CD8-positive, alpha-beta T cell (primary cell): ENCODE measurements at regions of chr6 and their contacts with region 1.

Region 1: DNA sequence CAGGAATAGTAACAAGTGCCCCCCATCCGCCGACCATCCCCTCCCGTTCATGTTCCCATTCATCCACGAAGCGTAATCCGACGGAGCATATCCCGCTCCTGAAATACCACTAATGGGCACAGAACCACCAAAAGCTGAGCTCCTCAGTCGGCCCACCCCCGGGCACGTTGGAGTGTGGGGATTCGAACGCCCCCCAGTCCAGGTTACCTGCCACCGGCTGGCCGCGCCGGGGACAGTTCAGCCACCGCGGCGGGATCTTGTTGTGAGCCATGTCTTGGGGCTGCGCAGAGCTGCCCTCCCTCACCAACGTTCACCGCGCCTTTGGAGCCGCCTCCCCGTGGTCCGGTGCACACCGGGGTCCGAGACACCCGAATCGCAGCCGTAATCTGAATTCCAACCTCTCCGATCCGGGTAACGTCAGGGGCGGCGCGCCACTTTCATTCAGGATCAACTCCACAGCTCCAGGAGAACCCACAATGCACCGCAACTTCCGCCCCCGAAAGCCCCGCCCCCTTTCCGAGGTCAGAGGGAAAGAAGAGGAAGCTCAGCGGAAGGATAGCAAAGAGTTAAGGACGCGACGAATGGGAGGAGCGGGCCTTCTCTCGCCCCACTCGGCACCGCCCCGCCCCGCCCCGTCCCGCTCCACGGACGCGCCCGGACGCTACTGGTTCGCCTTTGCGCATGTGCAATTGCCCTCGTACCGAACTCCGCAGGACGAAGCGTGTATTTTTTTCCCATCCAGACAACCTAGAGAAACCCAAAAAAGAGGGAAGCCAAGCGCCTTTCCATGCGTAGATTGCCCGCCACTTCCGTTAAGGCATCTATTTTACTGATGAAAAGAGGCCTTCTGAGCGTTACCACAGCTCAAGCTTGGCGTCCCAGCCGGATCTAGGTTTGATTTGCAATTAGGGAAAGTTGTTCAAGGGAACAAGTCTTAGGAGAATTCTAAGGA is at the start of gene RNGTT:
- DNase-seq: peak; percentile 95 to 98 (median 98)
- ATAC-seq: peak; percentile 99
- H3K4me3 ChIP-seq: peak within 1 kb of the TSS; percentile 90 to 92
- H3K4me3 Mint-ChIP-seq: peak within 1 kb of the TSS; percentile 98
- H3K27ac ChIP-seq: peak within 1 kb of the TSS; percentile 58 to 73
- H3K27ac Mint-ChIP-seq: peak within 1 kb of the TSS; percentile 94
- H3K4me1 ChIP-seq: peaks cover 20% of the 10 kb centered on the region
- H3K4me1 Mint-ChIP-seq: peaks cover 51% of the 10 kb centered on the region
- H3K27me3 ChIP-seq: no peaks in the 10 kb centered on the region
- H3K27me3 Mint-ChIP-seq: no peaks in the 10 kb centered on the region
- CTCF ChIP-seq: no peak
- total RNA-seq, gene RNGTT: 10.1 to 10.3 TPM

Region 2: GRCh38 chr6:87322304-87323212 is 1640.9 kb before region 1 on chr6 and contains the start of gene SMIM8:
- CTCF ChIA-PET with region 1: no interaction called
- POLR2A ChIA-PET with region 1: no interaction called
- intact Hi-C with region 1: loop called in 1 of 2 experiments (anchors 5 kb)
- DNase-seq: peak; percentile 66 to 90 (median 86)
- ATAC-seq: peak; percentile 99
- H3K4me3 ChIP-seq: peak within 1 kb of the TSS; percentile 72 to 86
- H3K4me3 Mint-ChIP-seq: peak within 1 kb of the TSS; percentile 94
- H3K27ac ChIP-seq: peak within 1 kb of the TSS; percentile 52 to 58
- H3K27ac Mint-ChIP-seq: peak within 1 kb of the TSS; percentile 90
- H3K4me1 ChIP-seq: peaks cover 6% of the 10 kb centered on the region
- H3K4me1 Mint-ChIP-seq: peaks cover 25% of the 10 kb centered on the region
- H3K27me3 ChIP-seq: no peaks in the 10 kb centered on the region
- H3K27me3 Mint-ChIP-seq: no peaks in the 10 kb centered on the region
- CTCF ChIP-seq: peak; percentile 99
- total RNA-seq, gene SMIM8: 4.2 TPM

Region 3: GRCh38 chr6:87472525-87473418 is 1490.6 kb before region 1 on chr6 and contains the start of gene SLC35A1:
- CTCF ChIA-PET with region 1: no interaction called
- POLR2A ChIA-PET with region 1: no interaction called
- intact Hi-C with region 1: loop called in 1 of 2 experiments (anchors 2 kb)
- DNase-seq: peak; percentile 73 to 93 (median 86)
- ATAC-seq: peak; percentile 91
- H3K4me3 ChIP-seq: peak within 1 kb of the TSS; percentile 93 to 96
- H3K4me3 Mint-ChIP-seq: peak within 1 kb of the TSS; percentile 99
- H3K27ac ChIP-seq: peak within 1 kb of the TSS; percentile 97 to 98
- H3K27ac Mint-ChIP-seq: peak within 1 kb of the TSS; percentile 100
- H3K4me1 ChIP-seq: peaks cover 15% of the 10 kb centered on the region
- H3K4me1 Mint-ChIP-seq: peaks cover 18% of the 10 kb centered on the region
- H3K27me3 ChIP-seq: no peaks in the 10 kb centered on the region
- H3K27me3 Mint-ChIP-seq: peaks cover 3% of the 10 kb centered on the region
- CTCF ChIP-seq: peak; percentile 20
- total RNA-seq, gene SLC35A1: 4.3 to 4.9 TPM

Region 4: GRCh38 chr6:89145787-89146646 is 182.6 kb after region 1 on chr6 and contains the start of gene PM20D2:
- CTCF ChIA-PET with region 1: no interaction called
- POLR2A ChIA-PET with region 1: interaction called, 3 read pairs
- intact Hi-C with region 1: loop called in 1 of 2 experiments (anchors 1 kb)
- DNase-seq: peak; percentile 35 to 80 (median 64)
- ATAC-seq: peak; percentile 77
- H3K4me3 ChIP-seq: peak within 1 kb of the TSS; percentile 66 to 87
- H3K4me3 Mint-ChIP-seq: peak within 1 kb of the TSS; percentile 96
- H3K27ac ChIP-seq: peak within 1 kb of the TSS; percentile 73 to 85
- H3K27ac Mint-ChIP-seq: peak within 1 kb of the TSS; percentile 97
- H3K4me1 ChIP-seq: peaks cover 19% of the 10 kb centered on the region
- H3K4me1 Mint-ChIP-seq: peaks cover 34% of the 10 kb centered on the region
- H3K27me3 ChIP-seq: no peaks in the 10 kb centered on the region
- H3K27me3 Mint-ChIP-seq: no peaks in the 10 kb centered on the region
- CTCF ChIP-seq: no peak
- total RNA-seq, gene PM20D2: 5.5 to 6.2 TPM

Region 5: GRCh38 chr6:89638320-89639195 is 675.1 kb after region 1 on chr6 and contains the start of gene LYRM2:
- CTCF ChIA-PET with region 1: interaction called, 3 read pairs
- POLR2A ChIA-PET with region 1: interaction called, 3 read pairs
- intact Hi-C with region 1: loop called in 1 of 2 experiments (anchors 2 kb)
- DNase-seq: peak; percentile 83 to 95 (median 89)
- ATAC-seq: peak; percentile 95
- H3K4me3 ChIP-seq: peak within 1 kb of the TSS; percentile 84 to 90
- H3K4me3 Mint-ChIP-seq: peak within 1 kb of the TSS; percentile 99
- H3K27ac ChIP-seq: peak within 1 kb of the TSS; percentile 91 to 98
- H3K27ac Mint-ChIP-seq: peak within 1 kb of the TSS; percentile 99
- H3K4me1 ChIP-seq: peaks cover 15% of the 10 kb centered on the region
- H3K4me1 Mint-ChIP-seq: peaks cover 34% of the 10 kb centered on the region
- H3K27me3 ChIP-seq: no peaks in the 10 kb centered on the region
- H3K27me3 Mint-ChIP-seq: no peaks in the 10 kb centered on the region
- CTCF ChIP-seq: no peak
- total RNA-seq, gene LYRM2: 16.7 to 17.8 TPM

Region 6: DNA sequence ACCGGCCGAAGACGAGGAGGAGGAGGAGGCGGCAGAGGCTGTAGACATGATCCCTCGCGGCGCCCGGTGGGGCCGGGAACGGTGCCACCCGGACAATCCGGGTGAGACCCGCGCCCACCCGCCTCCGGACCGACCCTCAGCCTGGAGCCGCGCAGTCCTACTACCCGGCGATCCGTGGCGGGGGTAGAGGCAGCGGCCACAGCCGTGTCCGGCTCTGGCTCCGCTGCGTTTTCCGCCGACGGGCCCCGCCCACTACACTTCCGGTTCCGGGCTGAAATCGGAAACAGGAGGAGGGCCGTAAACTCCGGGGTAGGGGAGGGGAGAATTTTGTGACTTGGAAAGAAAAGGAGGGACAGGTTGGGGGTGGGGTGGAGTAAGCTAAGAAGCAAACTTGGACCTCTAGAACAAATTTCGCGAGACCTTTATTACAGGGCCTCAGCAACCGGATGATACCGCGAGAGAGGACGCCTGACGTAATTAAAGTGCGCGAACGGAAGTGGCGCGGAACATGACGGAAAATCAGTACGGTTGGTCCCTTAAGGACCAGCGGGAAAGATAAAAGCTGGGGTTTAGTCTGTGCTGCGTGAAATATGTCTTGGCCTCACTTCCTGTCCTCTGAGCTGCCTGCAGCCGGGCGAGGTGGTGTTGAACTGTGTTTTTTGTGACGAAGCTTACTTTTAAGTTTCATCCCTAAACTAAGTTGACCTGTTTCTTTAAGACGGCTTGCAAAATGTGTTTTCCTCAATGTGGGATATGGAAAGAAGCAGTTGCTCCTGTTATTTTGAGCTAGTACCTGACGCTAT is 1623.6 kb after region 1 on chr6 and contains the start of gene MAP3K7:
- CTCF ChIA-PET with region 1: no interaction called
- POLR2A ChIA-PET with region 1: no interaction called
- intact Hi-C with region 1: loop called in 1 of 2 experiments (anchors 2 kb)
- DNase-seq: peak; percentile 88 to 97 (median 94)
- ATAC-seq: peak; percentile 86
- H3K4me3 ChIP-seq: peak within 1 kb of the TSS; percentile 79 to 94
- H3K4me3 Mint-ChIP-seq: peak within 1 kb of the TSS; percentile 95
- H3K27ac ChIP-seq: peak within 1 kb of the TSS; percentile 96 to 99
- H3K27ac Mint-ChIP-seq: peak within 1 kb of the TSS; percentile 99
- H3K4me1 ChIP-seq: peaks cover 39% of the 10 kb centered on the region
- H3K4me1 Mint-ChIP-seq: peaks cover 47% of the 10 kb centered on the region
- H3K27me3 ChIP-seq: no peaks in the 10 kb centered on the region
- H3K27me3 Mint-ChIP-seq: peaks cover 6% of the 10 kb centered on the region
- CTCF ChIP-seq: no peak
- total RNA-seq, gene MAP3K7: 9.7 to 10.1 TPM